GM12878 (cell line): ENCODE measurements at regions of chr3 and their contacts with region 1.

Region 1: DNA sequence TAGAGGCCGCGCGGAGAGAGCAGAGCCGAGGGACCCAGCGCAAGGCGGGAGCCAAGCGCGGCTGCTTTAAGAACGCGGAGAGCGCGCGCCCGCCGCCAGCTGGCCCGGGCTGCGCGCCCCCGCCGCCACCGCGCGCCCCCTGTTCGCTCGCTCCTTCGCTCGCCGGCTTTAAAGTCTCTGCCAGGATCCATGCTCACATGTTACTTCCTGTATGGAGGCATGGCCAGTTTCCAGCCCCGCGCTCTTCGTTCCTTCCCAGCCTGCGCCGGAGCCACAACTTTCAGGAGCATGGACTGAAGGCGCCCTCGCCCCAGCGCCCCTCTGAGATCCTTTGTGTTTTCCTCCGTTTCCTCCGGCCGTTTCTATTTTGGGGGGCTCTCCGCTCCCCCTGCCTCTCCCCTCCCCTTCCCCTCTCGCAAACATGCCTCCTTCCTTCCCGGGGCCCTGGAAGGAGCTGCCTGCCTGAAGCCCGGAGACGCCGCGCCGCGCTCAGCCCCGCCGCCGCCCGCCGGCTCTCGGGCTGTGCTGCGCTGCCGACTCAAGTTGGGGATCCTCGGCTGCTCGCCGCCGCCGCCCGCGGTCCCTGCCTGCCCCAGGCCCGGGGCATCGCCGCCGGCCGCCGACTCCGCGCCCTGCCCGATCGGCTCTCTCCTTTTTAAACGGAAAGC is at the start of gene PTPRG:
- DNase-seq: no peak
- ATAC-seq: peak; percentile 61
- H3K4me3 ChIP-seq: peak within 1 kb of the TSS; percentile 59
- H3K27ac ChIP-seq: no peak within 1 kb of the TSS
- H3K4me1 ChIP-seq: no peaks in the 10 kb centered on the region
- H3K27me3 ChIP-seq: peaks cover 5 to 20% of the 10 kb centered on the region in 2 experiments
- CTCF ChIP-seq: no peak
- EP300 ChIP-seq: no peak
- POLR2A ChIP-seq: no peak
- RAD21 ChIP-seq: no peak
- polyA plus RNA-seq, gene PTPRG: 0.29 to 0.42 TPM

Region 2: DNA sequence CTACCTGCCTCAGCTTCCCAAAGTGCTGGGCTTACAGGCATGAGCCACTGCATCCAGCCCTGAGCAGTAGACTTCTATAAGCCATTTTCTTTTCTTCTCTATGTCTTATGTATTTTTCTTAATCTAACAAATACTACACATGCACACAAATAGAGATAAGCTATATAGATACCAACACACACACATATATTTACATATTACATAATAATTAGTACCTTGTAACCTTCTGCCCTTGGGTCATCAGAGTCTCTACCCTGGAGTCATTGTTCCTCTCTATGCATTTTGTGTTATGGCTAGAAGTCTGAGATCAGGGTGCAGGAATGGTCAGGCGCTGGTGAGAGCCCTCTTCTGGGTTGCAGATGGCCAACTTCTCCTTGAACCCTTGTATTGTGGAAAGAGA is 154.1 kb before region 1 on chr3:
- CTCF ChIA-PET with region 1: no interaction called
- POLR2A ChIA-PET with region 1: no interaction called
- RAD21 ChIA-PET with region 1: no interaction called
- SMC1A ChIA-PET with region 1: no interaction called
- in situ Hi-C with region 1: no loop called
- intact Hi-C with region 1: no loop called
- DNase-seq: no peak
- ATAC-seq: no peak
- H3K4me3 ChIP-seq: no peak overlapping the region
- H3K27ac ChIP-seq: no peak overlapping the region
- H3K4me1 ChIP-seq: no peaks in the 10 kb centered on the region
- H3K27me3 ChIP-seq: no peaks in the 10 kb centered on the region
- CTCF ChIP-seq: no peak
- EP300 ChIP-seq: no peak
- POLR2A ChIP-seq: no peak
- RAD21 ChIP-seq: no peak

Region 3: GRCh38 chr3:61530355-61530754 is 31.2 kb before region 1 on chr3:
- CTCF ChIA-PET with region 1: interaction called, 29 read pairs
- POLR2A ChIA-PET with region 1: interaction called, 4 read pairs
- RAD21 ChIA-PET with region 1: interaction called, 13 read pairs
- SMC1A ChIA-PET with region 1: interaction called, 42 read pairs
- in situ Hi-C with region 1: no loop called
- intact Hi-C with region 1: no loop called
- DNase-seq: no peak
- ATAC-seq: peak; percentile 81
- H3K4me3 ChIP-seq: no peak overlapping the region
- H3K27ac ChIP-seq: no peak overlapping the region
- H3K4me1 ChIP-seq: no peaks in the 10 kb centered on the region
- H3K27me3 ChIP-seq: no peaks in the 10 kb centered on the region
- CTCF ChIP-seq: peak; percentile 51 to 53 (median 52)
- EP300 ChIP-seq: no peak
- POLR2A ChIP-seq: no peak
- RAD21 ChIP-seq: peak; percentile 54

Region 4: GRCh38 chr3:61669668-61670299 is 108.3 kb after region 1 on chr3:
- CTCF ChIA-PET with region 1: interaction called, 21 read pairs
- POLR2A ChIA-PET with region 1: interaction called, 8 read pairs
- RAD21 ChIA-PET with region 1: interaction called, 11 read pairs
- SMC1A ChIA-PET with region 1: interaction called, 21 read pairs
- in situ Hi-C with region 1: no loop called
- intact Hi-C with region 1: no loop called
- DNase-seq: no peak
- ATAC-seq: peak; percentile 90
- H3K4me3 ChIP-seq: no peak overlapping the region
- H3K27ac ChIP-seq: no peak overlapping the region
- H3K4me1 ChIP-seq: no peaks in the 10 kb centered on the region
- H3K27me3 ChIP-seq: no peaks in the 10 kb centered on the region
- CTCF ChIP-seq: no peak
- EP300 ChIP-seq: no peak
- POLR2A ChIP-seq: no peak
- RAD21 ChIP-seq: no peak

Region 5: GRCh38 chr3:61778145-61778494 is 216.6 kb after region 1 on chr3:
- CTCF ChIA-PET with region 1: interaction called, 14 read pairs
- POLR2A ChIA-PET with region 1: no interaction called
- RAD21 ChIA-PET with region 1: interaction called, 14 read pairs
- SMC1A ChIA-PET with region 1: interaction called, 27 read pairs
- in situ Hi-C with region 1: no loop called
- intact Hi-C with region 1: loop called (anchors 5 kb)
- DNase-seq: no peak
- ATAC-seq: peak; percentile 62
- H3K4me3 ChIP-seq: no peak overlapping the region
- H3K27ac ChIP-seq: no peak overlapping the region
- H3K4me1 ChIP-seq: no peaks in the 10 kb centered on the region
- H3K27me3 ChIP-seq: no peaks in the 10 kb centered on the region; a peak in 1 of 4 replicates
- CTCF ChIP-seq: no peak; a peak in 1 of 6 replicates
- EP300 ChIP-seq: no peak
- POLR2A ChIP-seq: no peak
- RAD21 ChIP-seq: no peak

Region 6: DNA sequence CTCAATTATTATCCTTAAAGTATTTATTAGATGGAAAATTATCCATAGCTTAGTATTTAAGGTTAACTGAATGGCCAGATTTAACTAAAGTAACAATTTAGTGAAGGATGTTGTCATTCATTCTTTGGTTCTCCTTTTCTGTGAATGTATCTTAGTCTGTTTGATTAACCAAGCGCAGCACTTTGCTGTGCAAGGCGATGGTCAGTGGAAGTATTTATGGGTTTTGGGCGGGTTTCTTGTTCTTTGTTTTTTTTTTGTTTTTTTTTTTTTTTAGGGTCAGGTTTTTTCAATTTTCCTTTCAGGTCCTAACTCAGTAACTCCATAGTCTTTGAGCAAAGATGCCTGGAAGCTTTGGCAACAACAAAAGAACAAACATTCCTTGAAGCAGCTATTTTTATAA is 328.7 kb after region 1 on chr3:
- CTCF ChIA-PET with region 1: interaction called, 11 read pairs
- POLR2A ChIA-PET with region 1: interaction called, 3 read pairs
- RAD21 ChIA-PET with region 1: interaction called, 18 read pairs
- SMC1A ChIA-PET with region 1: interaction called, 18 read pairs
- in situ Hi-C with region 1: no loop called
- intact Hi-C with region 1: no loop called
- DNase-seq: no peak
- ATAC-seq: peak; percentile 30
- H3K4me3 ChIP-seq: no peak overlapping the region
- H3K27ac ChIP-seq: no peak overlapping the region
- H3K4me1 ChIP-seq: peaks cover 5% of the 10 kb centered on the region; the same call in 1 of the 2 replicates
- H3K27me3 ChIP-seq: no peaks in the 10 kb centered on the region
- CTCF ChIP-seq: no peak
- EP300 ChIP-seq: no peak
- POLR2A ChIP-seq: no peak
- RAD21 ChIP-seq: no peak

Region 7: GRCh38 chr3:62122819-62123218 is 561.3 kb after region 1 on chr3:
- CTCF ChIA-PET with region 1: interaction called, 4 read pairs
- POLR2A ChIA-PET with region 1: no interaction called
- RAD21 ChIA-PET with region 1: interaction called, 4 read pairs
- SMC1A ChIA-PET with region 1: no interaction called
- in situ Hi-C with region 1: no loop called
- intact Hi-C with region 1: loop called (anchors 5 kb)
- DNase-seq: no peak
- ATAC-seq: peak; percentile 17; the same call in 2 of the 3 replicates
- H3K4me3 ChIP-seq: no peak overlapping the region
- H3K27ac ChIP-seq: no peak overlapping the region
- H3K4me1 ChIP-seq: no peaks in the 10 kb centered on the region
- H3K27me3 ChIP-seq: no peaks in the 10 kb centered on the region; a peak in 1 of 4 replicates
- CTCF ChIP-seq: no peak
- EP300 ChIP-seq: no peak
- POLR2A ChIP-seq: no peak
- RAD21 ChIP-seq: no peak